A673 (cell line): ENCODE measurements at regions of chr4 and their contacts with region 1.

Region 1: GRCh38 chr4:666822-667544 is 7.1 kb downstream of the ATP5ME start:
- DNase-seq: no peak
- H3K4me3 ChIP-seq: no peak overlapping the region
- H3K27ac ChIP-seq: no peak overlapping the region
- H3K4me1 ChIP-seq: peaks cover 4% of the 10 kb centered on the region
- H3K27me3 ChIP-seq: no peaks in the 10 kb centered on the region
- CTCF ChIP-seq: no peak

Region 2: GRCh38 chr4:146621-147020 is 520.4 kb before region 1 on chr4:
- CTCF ChIA-PET with region 1: no interaction called
- POLR2A ChIA-PET with region 1: no interaction called
- intact Hi-C with region 1: no loop called
- DNase-seq: no peak
- H3K4me3 ChIP-seq: no peak overlapping the region
- H3K27ac ChIP-seq: no peak overlapping the region
- H3K4me1 ChIP-seq: no peaks in the 10 kb centered on the region
- H3K27me3 ChIP-seq: no peaks in the 10 kb centered on the region
- CTCF ChIP-seq: no peak

Region 3: DNA sequence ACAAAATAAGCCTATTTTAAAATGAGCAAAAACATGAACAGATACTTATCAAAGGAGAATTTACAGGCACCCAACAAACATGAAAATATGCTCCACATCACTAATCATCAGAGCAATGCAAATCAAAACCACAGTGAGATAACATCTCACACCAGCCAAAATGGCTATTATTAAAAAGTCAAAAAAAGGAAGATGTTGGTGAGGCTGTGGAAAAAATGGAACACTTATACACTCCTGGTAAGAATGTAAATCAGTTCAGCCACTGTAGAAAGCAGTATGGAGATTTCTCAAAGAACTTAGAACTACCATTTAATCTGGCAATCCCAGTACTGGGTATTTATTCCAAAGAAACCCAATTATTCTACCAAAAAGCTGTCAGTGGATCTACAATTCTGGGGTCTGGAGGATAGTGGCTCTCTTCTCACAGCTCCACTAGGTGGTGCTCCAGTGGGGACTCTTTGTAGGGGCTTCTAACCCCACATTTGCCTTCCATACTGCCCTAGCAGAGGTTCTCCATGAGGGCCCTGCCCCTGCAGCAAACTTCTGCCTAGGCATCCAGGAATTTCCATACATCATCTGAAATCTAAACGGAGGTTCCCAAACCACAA is 352.6 kb before region 1 on chr4:
- CTCF ChIA-PET with region 1: interaction called, 12 read pairs
- POLR2A ChIA-PET with region 1: no interaction called
- intact Hi-C with region 1: no loop called
- DNase-seq: no peak
- H3K4me3 ChIP-seq: no peak overlapping the region
- H3K27ac ChIP-seq: no peak overlapping the region
- H3K4me1 ChIP-seq: no peaks in the 10 kb centered on the region
- H3K27me3 ChIP-seq: no peaks in the 10 kb centered on the region
- CTCF ChIP-seq: no peak